Activated CD4-positive, alpha-beta T cell treated with anti-CD3 and anti-CD28 coated beads for 36 hours (primary cell): ENCODE measurements at regions of chr2 and their contacts with region 1.

Region 1: DNA sequence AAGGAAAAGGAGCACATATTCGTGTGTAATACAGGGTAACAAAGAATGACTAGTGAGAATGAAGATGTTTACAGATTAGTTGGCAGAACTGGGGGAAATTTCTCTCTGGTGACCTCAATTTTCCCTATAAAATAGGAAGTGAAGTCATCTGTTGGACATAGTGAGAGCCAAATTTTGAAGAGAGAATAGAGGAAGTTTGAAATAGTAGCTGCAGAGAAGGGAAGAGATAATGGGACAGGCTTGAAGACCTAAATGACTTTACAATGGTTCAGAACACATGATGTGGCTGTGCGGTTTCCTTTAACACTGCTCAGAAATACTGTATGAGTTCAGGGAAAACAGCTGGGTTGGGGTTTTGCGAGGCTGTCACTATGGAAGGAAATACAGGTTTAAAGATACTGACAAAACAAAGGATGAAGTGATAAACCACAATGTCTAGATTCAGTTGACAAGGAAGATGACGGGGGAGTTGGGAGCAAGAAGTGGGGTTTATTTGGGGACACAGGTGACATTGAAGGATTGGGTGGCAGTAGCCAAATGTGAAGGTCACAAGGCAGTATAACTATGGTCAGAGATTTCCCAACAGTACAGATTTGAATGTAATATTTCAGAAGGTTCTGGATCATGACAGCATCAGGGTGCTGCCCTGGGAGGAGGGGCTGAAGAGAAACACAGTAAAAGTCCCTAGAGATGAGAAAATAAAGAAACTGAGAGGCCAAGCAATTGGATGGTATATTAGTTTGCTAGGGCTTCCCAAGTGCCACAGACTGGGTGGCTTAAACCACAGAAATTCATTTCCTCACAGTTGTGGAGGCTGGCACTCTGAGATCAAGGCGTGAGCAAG is 82.6 kb upstream of the TANK start:
- DNase-seq: peak; percentile 85
- ATAC-seq: peak; percentile 84
- H3K4me3 Mint-ChIP-seq: peak overlapping the region; percentile 42
- H3K27ac Mint-ChIP-seq: peak overlapping the region; percentile 88
- H3K4me1 Mint-ChIP-seq: peaks cover 44% of the 10 kb centered on the region
- H3K27me3 Mint-ChIP-seq: no peaks in the 10 kb centered on the region

Region 2: DNA sequence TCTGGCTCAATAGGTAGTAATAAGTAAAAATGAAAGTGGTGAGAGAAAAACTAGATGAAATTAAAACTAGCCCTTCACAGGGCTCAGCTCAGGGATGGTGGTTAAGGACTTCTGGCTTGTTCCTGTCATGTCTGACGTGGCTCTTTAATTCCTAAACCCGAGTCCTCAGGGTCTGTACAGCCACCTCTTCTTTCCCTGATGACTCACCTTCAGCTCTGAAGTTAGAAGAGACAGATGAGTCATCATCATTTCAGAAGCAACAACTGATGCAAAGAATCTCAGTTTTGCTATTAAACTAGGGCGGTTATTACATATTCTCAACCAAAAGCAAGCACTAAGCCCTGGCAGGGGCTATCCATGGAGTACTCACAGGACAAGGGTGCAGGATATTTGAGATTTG is 853.5 kb before region 1 on chr2:
- CTCF ChIA-PET with region 1: no interaction called
- POLR2A ChIA-PET with region 1: no interaction called
- intact Hi-C with region 1: loop called (anchors 5 kb)
- DNase-seq: peak; percentile 56
- ATAC-seq: peak; percentile 78
- H3K4me3 Mint-ChIP-seq: no peak overlapping the region
- H3K27ac Mint-ChIP-seq: peak overlapping the region; percentile 75
- H3K4me1 Mint-ChIP-seq: peaks cover 56% of the 10 kb centered on the region
- H3K27me3 Mint-ChIP-seq: peaks cover 14% of the 10 kb centered on the region

Region 3: DNA sequence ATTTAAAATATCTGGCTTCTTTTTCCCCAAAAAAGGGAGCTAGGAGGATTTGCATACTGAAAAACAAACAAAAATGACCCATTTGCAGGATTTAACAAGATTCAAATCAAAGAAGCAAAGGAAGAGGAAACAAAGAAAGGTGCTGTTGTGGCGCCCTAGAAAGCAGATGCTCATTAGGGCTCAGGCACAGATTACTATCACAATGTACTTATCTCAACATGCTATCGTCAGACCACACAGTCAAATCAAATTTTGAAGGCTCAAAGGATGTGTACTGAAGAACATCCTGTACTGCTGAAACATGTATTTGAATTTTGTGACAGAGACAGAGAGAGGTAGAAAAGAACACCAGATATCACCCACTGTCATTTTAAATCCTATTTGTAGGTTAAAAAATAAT is 594.9 kb before region 1 on chr2:
- CTCF ChIA-PET with region 1: no interaction called
- POLR2A ChIA-PET with region 1: no interaction called
- intact Hi-C with region 1: loop called in 1 of 2 experiments (anchors 10 kb)
- DNase-seq: peak; percentile 30
- ATAC-seq: peak; percentile 79
- H3K4me3 Mint-ChIP-seq: peak overlapping the region; percentile 50
- H3K27ac Mint-ChIP-seq: peak overlapping the region; percentile 84
- H3K4me1 Mint-ChIP-seq: peaks cover 78% of the 10 kb centered on the region
- H3K27me3 Mint-ChIP-seq: no peaks in the 10 kb centered on the region

Region 4: GRCh38 chr2:161122772-161123530 is 45.4 kb after region 1 on chr2:
- CTCF ChIA-PET with region 1: interaction called, 3 read pairs
- POLR2A ChIA-PET with region 1: no interaction called
- intact Hi-C with region 1: loop called (anchors 1 to 5 kb)
- DNase-seq: peak; percentile 61
- ATAC-seq: peak; percentile 95
- H3K4me3 Mint-ChIP-seq: no peak overlapping the region
- H3K27ac Mint-ChIP-seq: no peak overlapping the region
- H3K4me1 Mint-ChIP-seq: peaks cover 24% of the 10 kb centered on the region
- H3K27me3 Mint-ChIP-seq: no peaks in the 10 kb centered on the region

Region 5: DNA sequence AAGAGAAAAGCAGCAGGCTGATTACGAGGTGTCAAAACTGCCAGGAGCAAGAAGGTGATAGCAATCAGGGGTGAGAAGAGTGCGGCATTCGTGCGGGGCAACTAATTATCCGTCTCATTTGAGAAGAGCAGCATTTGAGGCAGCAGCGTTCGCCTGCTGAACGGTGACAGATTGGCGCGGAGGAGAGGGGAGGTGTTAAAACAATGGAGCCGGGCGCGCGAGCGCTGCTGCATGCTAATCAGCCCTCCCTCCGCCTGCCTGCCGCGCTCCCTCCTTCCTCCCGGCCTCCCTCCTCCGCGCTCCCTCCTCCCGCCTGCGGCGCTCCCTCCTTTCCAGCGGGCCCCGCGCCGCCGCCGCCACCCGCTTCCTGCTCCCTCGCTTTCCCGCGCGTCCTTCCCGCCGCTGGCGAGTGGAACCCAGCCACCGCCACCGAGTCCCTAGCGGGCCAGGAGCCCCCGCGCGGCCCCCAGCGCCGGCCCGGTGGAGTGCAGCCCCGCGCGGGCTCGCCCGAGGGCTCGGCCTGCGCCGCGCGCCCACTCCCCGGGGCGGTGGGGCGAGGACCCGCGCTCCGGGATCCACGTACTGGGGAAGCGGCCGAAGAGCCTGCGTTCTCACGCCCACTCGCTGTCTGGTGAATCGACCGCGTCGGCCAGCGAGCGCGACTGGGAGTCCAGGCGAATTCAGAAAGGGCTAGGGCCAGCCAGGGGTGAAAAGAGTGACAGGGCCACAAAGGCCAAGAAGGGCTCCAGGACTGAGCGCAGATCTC is 161.2 kb after region 1 on chr2:
- CTCF ChIA-PET with region 1: no interaction called
- POLR2A ChIA-PET with region 1: no interaction called
- intact Hi-C with region 1: loop called in 1 of 2 experiments (anchors 5 kb)
- DNase-seq: peak; percentile 79
- ATAC-seq: peak; percentile 55
- H3K4me3 Mint-ChIP-seq: peak overlapping the region; percentile 76
- H3K27ac Mint-ChIP-seq: peak overlapping the region; percentile 81
- H3K4me1 Mint-ChIP-seq: peaks cover 54% of the 10 kb centered on the region
- H3K27me3 Mint-ChIP-seq: no peaks in the 10 kb centered on the region

Region 6: DNA sequence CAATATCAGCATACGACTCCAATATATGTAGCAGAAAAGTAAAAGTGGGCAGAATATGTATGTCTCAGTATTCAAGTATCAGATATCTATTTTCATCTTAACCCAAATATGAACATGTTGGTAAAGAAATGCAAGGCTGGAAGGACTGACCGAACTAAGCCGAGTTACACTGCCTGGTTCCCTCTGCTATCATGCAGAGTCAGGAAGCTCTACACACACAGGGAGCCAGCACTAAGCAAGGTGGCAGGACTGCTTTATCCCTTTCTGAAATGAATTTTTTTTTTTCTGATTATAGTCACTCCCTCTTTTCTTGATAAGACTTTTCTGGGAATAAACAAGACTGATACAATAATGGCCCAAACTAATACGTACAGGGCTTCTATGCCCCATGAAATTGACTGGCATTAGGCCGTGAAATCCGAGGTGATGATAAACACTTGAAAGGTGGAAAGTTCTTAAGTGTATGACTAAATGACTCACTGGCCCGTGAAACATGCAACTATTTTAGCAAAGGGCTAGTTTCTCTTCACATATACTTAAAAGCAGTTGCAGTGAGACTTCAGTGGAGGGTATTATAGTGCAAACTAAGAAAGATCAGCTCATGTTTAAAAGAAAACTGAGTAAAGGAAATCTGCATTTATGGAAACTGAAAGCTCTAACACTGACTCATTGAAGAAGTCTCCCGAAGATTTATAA is 981.5 kb after region 1 on chr2:
- CTCF ChIA-PET with region 1: no interaction called
- POLR2A ChIA-PET with region 1: no interaction called
- intact Hi-C with region 1: loop called in 1 of 2 experiments (anchors 5 kb)
- DNase-seq: peak; percentile 54
- ATAC-seq: peak; percentile 78
- H3K4me3 Mint-ChIP-seq: peak overlapping the region; percentile 52
- H3K27ac Mint-ChIP-seq: peak overlapping the region; percentile 85
- H3K4me1 Mint-ChIP-seq: peaks cover 86% of the 10 kb centered on the region
- H3K27me3 Mint-ChIP-seq: no peaks in the 10 kb centered on the region